Kidney (tissue), 22 donors: ENCODE measurements at regions of chr19 and their contacts with region 1.

Region 1: DNA sequence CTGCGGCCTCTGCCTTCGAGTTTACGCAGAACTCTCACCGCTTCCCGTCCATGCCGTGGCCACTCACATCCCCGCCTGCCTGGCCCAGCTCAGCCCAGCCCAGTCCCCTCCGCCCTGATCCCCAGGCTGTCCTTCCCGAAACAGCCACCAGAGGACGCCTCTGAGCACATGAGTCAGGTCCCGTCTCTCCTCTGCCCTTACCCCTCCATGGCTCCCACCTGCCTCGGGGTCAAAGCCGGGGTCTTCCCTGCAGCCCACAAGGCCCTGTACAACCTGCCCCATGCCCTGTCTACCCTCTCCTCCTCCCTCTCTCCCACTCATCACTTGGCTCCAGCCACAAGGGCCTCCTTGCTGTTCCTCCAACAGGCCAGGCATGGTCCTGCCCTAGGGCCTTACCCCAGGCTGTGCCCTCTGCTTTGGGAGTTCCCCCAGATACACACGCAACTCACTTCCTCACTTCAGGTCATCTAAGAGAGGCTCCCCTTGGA is 8.1 kb upstream of the SEMA6B start:
- DNase-seq: peak in 4 of 5 donors; percentile 52 to 83 (median 64)
- H3K4me3 ChIP-seq: no peak overlapping the region
- H3K27ac ChIP-seq: no peak overlapping the region
- H3K4me1 ChIP-seq: no peaks in the 10 kb centered on the region
- H3K27me3 ChIP-seq: no peaks in the 10 kb centered on the region
- CTCF ChIP-seq: peak; percentile 61

Region 2: DNA sequence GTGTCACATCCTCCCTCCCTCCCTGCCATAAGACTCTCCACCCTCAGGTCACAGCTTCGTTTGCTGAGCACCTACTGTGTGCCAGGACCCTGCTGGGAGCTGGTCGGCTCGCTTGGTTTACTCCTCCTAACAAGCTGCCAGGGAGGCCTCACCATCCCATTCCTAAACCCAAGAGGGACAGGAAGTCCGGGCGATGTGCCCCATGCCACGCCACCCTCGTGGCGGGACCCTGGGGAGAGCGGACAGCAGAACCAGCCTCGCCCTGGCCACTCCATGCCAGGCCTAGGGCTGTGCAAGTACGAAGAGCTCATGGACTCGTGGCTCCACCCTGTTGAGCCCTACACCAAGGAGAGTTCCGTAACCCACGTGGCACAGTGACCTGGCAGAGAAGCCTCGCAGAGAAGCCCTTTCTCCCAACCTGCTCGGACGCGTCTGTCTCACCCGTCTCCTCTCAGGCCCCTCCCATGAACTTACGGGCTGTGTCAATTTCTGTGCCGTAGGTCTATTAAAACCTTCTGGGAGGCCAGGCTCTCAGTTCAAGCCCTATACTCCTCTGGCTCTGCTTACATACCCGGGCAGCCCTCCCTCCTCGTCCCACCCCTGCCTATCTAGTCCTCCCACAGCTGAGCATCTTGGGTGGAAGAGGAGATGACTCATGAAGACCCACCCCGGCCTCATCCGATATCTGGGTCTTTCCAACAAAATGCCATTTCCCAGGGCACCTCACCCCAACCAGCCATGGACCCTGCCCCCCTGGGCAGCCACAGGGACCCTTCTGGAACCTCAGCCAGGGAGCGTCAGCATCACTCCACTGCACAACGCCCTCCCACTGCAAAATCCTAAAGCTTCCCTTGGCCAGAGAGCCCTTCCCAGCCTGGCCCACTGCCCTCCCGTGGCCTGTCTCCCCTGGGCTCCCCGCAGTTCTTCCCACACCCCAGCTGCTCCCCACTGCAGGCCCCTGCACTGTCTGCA is 112.6 kb before region 1 on chr19:
- intact Hi-C with region 1: no loop called
- DNase-seq: peak in 4 of 5 donors; percentile 55 to 76 (median 60)
- H3K4me3 ChIP-seq: no peak overlapping the region
- H3K27ac ChIP-seq: peak overlapping the region in 1 of 2 donors; percentile 14
- H3K4me1 ChIP-seq: peaks cover 0 to 18% (median 7%) of the 10 kb centered on the region in 3 donors
- H3K27me3 ChIP-seq: no peaks in the 10 kb centered on the region
- CTCF ChIP-seq: no peak

Region 3: DNA sequence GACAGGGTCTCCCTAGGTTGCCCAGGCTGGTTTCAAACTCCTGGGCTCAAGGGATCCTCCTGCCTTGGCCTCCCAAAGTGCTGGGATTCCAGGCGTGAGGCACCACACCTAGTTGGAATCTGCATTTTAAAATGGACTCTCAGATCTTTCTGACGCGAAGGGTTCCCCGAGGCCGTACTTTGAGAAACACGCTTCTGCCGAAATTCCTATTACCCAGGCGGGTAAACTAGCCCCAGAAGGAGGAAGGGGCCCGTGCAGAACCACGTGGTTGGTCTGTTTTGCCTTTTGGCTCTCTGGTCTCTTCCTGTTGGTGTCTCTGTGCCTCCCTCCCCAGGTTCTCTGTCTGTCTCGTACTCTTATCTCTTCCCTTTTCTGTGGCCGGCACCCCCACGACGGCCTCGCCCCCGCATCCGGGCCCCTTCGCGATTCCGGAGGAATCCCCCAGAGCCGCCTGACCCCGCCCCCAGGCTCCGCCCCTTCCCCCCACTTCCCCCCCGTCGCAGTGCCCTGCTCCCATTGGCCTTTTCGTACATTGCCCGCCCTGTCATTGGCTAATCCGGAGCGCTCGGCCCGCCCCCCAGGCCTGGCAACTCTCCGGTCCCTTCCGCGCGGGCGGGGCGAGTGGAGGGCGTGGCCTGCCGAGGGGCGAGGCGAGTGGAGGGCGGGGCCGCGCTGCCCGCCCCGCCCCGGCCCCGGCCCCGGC is 71.4 kb after region 1 on chr19 and contains the start of gene TNFAIP8L1:
- intact Hi-C with region 1: loop called (anchors 10 kb)
- DNase-seq: peak; percentile 98 to 99 (median 99)
- H3K4me3 ChIP-seq: peak within 1 kb of the TSS; percentile 65 to 87 (median 79)
- H3K27ac ChIP-seq: peak within 1 kb of the TSS; percentile 74 to 77
- H3K4me1 ChIP-seq: peaks cover 0 to 22% (median 4%) of the 10 kb centered on the region in 3 donors
- H3K27me3 ChIP-seq: no peaks in the 10 kb centered on the region
- CTCF ChIP-seq: no peak
- total RNA-seq, gene TNFAIP8L1: 11.5 TPM